ENCODE measurements at regions of chr4 and their contacts with region 1.

Region 1: GRCh38 chr4:158856852-158857251 is 88.0 kb downstream of the FNIP2 start:
- DNase-seq: peak; percentile 25
- H3K4me3 ChIP-seq: no peak overlapping the region
- H3K27ac ChIP-seq: no peak overlapping the region
- H3K4me1 ChIP-seq: no peaks in the 10 kb centered on the region
- H3K27me3 ChIP-seq: no peaks in the 10 kb centered on the region
- CTCF ChIP-seq: peak; percentile 44 to 63

Region 2: DNA sequence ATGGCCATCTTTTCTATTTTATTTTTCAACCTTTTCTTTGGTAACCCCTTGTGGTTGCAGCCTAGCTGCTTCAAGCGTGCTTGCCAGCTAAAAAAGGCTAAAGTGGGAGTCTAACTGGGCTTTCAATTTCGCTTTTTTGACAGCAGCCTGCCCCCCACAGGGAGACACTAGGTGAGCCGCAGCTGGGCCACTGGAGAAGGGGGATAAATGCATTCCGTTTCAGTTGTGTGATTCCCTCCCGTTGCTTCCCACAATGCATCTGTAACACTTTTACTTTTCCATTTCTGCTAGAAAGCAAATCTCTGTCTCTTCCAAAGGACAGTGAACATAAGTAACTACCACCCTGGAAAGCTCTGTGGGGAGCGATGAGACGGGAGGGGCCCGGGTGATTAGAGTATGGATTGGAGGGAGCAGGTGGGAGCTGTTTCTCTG is 159.8 kb after region 1 on chr4:
- CTCF ChIA-PET with region 1: no interaction called
- dilution Hi-C with region 1: no loop called
- in situ Hi-C with region 1: no loop called
- intact Hi-C with region 1: loop called (anchors 5 kb)
- DNase-seq: no peak
- H3K4me3 ChIP-seq: no peak overlapping the region
- H3K27ac ChIP-seq: no peak overlapping the region
- H3K4me1 ChIP-seq: peaks cover 11% of the 10 kb centered on the region
- H3K27me3 ChIP-seq: no peaks in the 10 kb centered on the region
- CTCF ChIP-seq: peak in 1 of 2 donors; percentile 14

Region 3: DNA sequence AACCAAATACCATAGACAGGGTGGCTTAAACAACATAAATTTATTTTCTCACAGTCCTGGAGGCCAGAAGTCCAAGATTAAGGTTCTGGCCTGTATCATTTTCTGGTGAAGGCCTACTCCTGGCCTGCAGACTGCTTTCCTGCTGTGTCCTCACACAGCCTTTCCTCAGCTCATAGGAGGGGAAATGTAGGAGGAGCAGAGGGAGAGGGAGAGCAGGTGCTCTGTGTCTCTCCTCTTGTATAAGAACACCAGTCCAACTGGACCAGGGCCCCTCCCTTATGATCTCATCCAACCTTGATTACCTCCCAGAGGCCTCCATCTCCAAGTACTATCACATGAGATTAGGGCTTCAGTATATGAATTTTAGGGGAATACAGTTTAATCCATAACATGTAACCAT is 280.3 kb after region 1 on chr4:
- CTCF ChIA-PET with region 1: no interaction called
- dilution Hi-C with region 1: no loop called
- in situ Hi-C with region 1: no loop called
- intact Hi-C with region 1: no loop called
- DNase-seq: peak; percentile 7
- H3K4me3 ChIP-seq: no peak overlapping the region
- H3K27ac ChIP-seq: no peak overlapping the region
- H3K4me1 ChIP-seq: no peaks in the 10 kb centered on the region
- H3K27me3 ChIP-seq: no peaks in the 10 kb centered on the region
- CTCF ChIP-seq: no peak

Region 4: GRCh38 chr4:159206427-159206871 is 349.6 kb after region 1 on chr4:
- CTCF ChIA-PET with region 1: no interaction called
- dilution Hi-C with region 1: no loop called
- in situ Hi-C with region 1: no loop called
- intact Hi-C with region 1: loop called (anchors 1 kb)
- DNase-seq: peak; percentile 60
- H3K4me3 ChIP-seq: peak overlapping the region in 1 of 3 experiments; percentile 20
- H3K27ac ChIP-seq: peak overlapping the region; percentile 20
- H3K4me1 ChIP-seq: peaks cover 7% of the 10 kb centered on the region
- H3K27me3 ChIP-seq: no peaks in the 10 kb centered on the region
- CTCF ChIP-seq: no peak

Measured in mammary epithelial cell (primary cell).